Activated B cell treated with CpG ODN at 0.5 μM for 24 hours (primary cell): ENCODE measurements at regions of chr9 and their contacts with region 1.

Region 1: GRCh38 chr9:133030317-133031129 is at the start of gene GTF3C5:
- DNase-seq: peak; percentile 83
- ATAC-seq: peak; percentile 97
- H3K4me3 Mint-ChIP-seq: peak within 1 kb of the TSS; percentile 99
- H3K27ac Mint-ChIP-seq: peak within 1 kb of the TSS; percentile 98
- H3K4me1 Mint-ChIP-seq: peaks cover 48% of the 10 kb centered on the region
- H3K27me3 Mint-ChIP-seq: no peaks in the 10 kb centered on the region
- CTCF ChIP-seq: no peak
- total RNA-seq, gene GTF3C5: 53.6 and 56.6 TPM in 2 replicates

Region 2: GRCh38 chr9:132752877-132753592 is 277.5 kb before region 1 on chr9:
- CTCF ChIA-PET with region 1: no interaction called
- POLR2A ChIA-PET with region 1: no interaction called
- intact Hi-C with region 1: no loop called
- DNase-seq: no peak
- ATAC-seq: no peak
- H3K4me3 Mint-ChIP-seq: no peak overlapping the region
- H3K27ac Mint-ChIP-seq: no peak overlapping the region
- H3K4me1 Mint-ChIP-seq: no peaks in the 10 kb centered on the region
- H3K27me3 Mint-ChIP-seq: peaks cover 4% of the 10 kb centered on the region
- CTCF ChIP-seq: no peak

Region 3: DNA sequence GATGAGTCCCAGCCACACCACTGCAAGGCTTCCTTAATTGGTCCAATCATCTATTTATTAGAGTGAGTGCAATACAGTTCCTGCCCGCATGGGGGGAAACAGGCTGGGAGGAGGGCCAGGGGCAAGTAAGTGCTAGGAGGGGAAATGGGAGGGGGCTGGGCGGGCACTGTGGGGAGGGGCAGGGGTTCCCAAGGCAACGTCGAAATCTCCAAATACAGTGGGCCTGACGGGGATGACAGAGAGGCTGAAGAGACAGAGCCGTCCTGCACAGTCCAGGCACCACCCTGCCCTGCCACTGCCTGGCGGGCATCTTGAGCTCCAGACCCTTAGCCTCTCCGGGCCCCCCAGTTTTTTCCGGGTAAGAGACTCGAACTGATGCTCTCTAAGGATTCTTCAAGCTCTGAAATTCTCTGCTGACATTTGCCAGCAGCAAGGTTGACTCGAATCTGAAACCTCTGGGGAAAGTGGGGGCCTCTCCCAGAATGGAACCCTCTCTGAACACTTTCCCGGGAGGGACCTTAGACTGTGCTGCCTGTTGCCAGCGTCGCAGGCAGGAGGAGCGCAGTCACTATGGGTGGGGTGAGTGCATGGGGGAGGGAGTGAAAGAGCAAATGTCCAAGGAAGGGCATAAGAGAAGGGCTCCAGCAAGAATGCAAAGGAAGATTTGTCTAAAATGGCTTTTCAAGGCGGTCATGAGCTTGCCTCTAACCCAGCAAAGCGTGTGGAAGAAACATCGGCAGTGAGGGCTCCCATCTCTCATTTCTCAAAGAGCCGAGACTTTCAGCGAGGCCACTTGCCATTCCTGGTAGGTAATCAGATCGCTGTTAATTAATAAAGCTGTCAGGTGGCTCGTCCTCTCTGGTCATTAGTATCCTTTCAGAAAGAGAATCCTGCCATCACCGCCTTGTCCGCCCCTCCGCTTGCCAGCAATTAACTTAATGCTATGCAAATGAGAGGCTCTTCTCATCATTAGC is 261.3 kb before region 1 on chr9:
- CTCF ChIA-PET with region 1: no interaction called
- POLR2A ChIA-PET with region 1: no interaction called
- intact Hi-C with region 1: loop called (anchors 2 kb)
- DNase-seq: peak; percentile 50
- ATAC-seq: peak; percentile 76
- H3K4me3 Mint-ChIP-seq: peak overlapping the region; percentile 100
- H3K27ac Mint-ChIP-seq: peak overlapping the region; percentile 98
- H3K4me1 Mint-ChIP-seq: peaks cover 22% of the 10 kb centered on the region
- H3K27me3 Mint-ChIP-seq: no peaks in the 10 kb centered on the region
- CTCF ChIP-seq: no peak

Region 4: DNA sequence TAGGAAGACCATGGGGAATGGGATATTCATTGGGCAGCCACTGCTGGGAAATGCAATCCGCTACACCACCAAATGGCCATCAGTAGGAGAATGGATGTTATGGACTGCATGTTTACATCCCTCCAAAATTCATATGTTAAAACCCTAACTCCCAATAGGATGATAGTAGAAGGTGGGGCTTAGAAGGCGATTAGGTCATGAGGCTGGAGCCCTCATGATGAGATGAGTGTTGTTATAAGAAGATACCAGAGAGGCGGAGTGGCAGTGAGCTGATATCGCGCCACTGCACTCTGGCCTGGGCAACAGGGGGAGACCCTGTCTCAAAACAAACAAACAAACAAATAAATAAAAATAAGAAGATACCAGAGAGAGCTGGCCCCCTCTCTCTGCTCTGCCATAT is 15.8 kb before region 1 on chr9:
- CTCF ChIA-PET with region 1: no interaction called
- POLR2A ChIA-PET with region 1: interaction called, 11 read pairs
- intact Hi-C with region 1: no loop called
- DNase-seq: no peak
- ATAC-seq: no peak
- H3K4me3 Mint-ChIP-seq: no peak overlapping the region
- H3K27ac Mint-ChIP-seq: no peak overlapping the region
- H3K4me1 Mint-ChIP-seq: no peaks in the 10 kb centered on the region
- H3K27me3 Mint-ChIP-seq: peaks cover 9% of the 10 kb centered on the region
- CTCF ChIP-seq: no peak

Region 5: GRCh38 chr9:133144137-133144903 is 113.8 kb after region 1 on chr9:
- CTCF ChIA-PET with region 1: interaction called, 8 read pairs
- POLR2A ChIA-PET with region 1: interaction called, 20 read pairs
- intact Hi-C with region 1: loop called (anchors 1 kb)
- DNase-seq: peak; percentile 90
- ATAC-seq: peak; percentile 63
- H3K4me3 Mint-ChIP-seq: peak overlapping the region; percentile 80
- H3K27ac Mint-ChIP-seq: peak overlapping the region; percentile 86
- H3K4me1 Mint-ChIP-seq: peaks cover 63% of the 10 kb centered on the region
- H3K27me3 Mint-ChIP-seq: no peaks in the 10 kb centered on the region
- CTCF ChIP-seq: peak; percentile 43

Region 6: GRCh38 chr9:133347985-133348717 is 317.6 kb after region 1 on chr9 and contains the starts of genes MED22 and RPL7A:
- CTCF ChIA-PET with region 1: no interaction called
- POLR2A ChIA-PET with region 1: interaction called, 14 read pairs
- intact Hi-C with region 1: no loop called
- DNase-seq: peak; percentile 82
- ATAC-seq: peak; percentile 83
- H3K4me3 Mint-ChIP-seq: peak within 1 kb of the TSS; percentile 99
- H3K27ac Mint-ChIP-seq: peak within 1 kb of the TSS; percentile 96
- H3K4me1 Mint-ChIP-seq: peaks cover 45% of the 10 kb centered on the region
- H3K27me3 Mint-ChIP-seq: no peaks in the 10 kb centered on the region
- CTCF ChIP-seq: no peak
- total RNA-seq, gene MED22: 40.7 and 45.7 TPM in 2 replicates
- total RNA-seq, gene RPL7A: 3,786 and 4,134 TPM in 2 replicates

Region 7: GRCh38 chr9:133478851-133479711 is 448.6 kb after region 1 on chr9 and contains the start of gene SLC2A6:
- CTCF ChIA-PET with region 1: no interaction called
- POLR2A ChIA-PET with region 1: no interaction called
- intact Hi-C with region 1: loop called (anchors 2 kb)
- DNase-seq: peak; percentile 85
- ATAC-seq: peak; percentile 93
- H3K4me3 Mint-ChIP-seq: peak within 1 kb of the TSS; percentile 90
- H3K27ac Mint-ChIP-seq: peak within 1 kb of the TSS; percentile 90
- H3K4me1 Mint-ChIP-seq: peaks cover 29% of the 10 kb centered on the region
- H3K27me3 Mint-ChIP-seq: no peaks in the 10 kb centered on the region
- CTCF ChIP-seq: no peak
- total RNA-seq, gene SLC2A6: 32.9 and 37.4 TPM in 2 replicates

Region 8: GRCh38 chr9:134163353-134164196 is 1133.1 kb after region 1 on chr9:
- CTCF ChIA-PET with region 1: no interaction called
- POLR2A ChIA-PET with region 1: interaction called, 8 read pairs
- intact Hi-C with region 1: loop called (anchors 5 kb)
- DNase-seq: peak; percentile 64
- ATAC-seq: peak; percentile 18
- H3K4me3 Mint-ChIP-seq: no peak overlapping the region
- H3K27ac Mint-ChIP-seq: no peak overlapping the region
- H3K4me1 Mint-ChIP-seq: peaks cover 9% of the 10 kb centered on the region
- H3K27me3 Mint-ChIP-seq: no peaks in the 10 kb centered on the region
- CTCF ChIP-seq: no peak